ENCODE measurements at regions of chr1 and their contacts with region 1.

Region 1: GRCh38 chr1:192668434-192668983 is 32.6 kb downstream of the RGS13 start:
- DNase-seq: no peak
- ATAC-seq: no peak
- H3K4me3 Mint-ChIP-seq: no peak overlapping the region
- H3K27ac Mint-ChIP-seq: no peak overlapping the region
- H3K4me1 Mint-ChIP-seq: no peaks in the 10 kb centered on the region
- H3K27me3 Mint-ChIP-seq: peaks cover 8% of the 10 kb centered on the region
- CTCF ChIP-seq: no peak

Region 2: DNA sequence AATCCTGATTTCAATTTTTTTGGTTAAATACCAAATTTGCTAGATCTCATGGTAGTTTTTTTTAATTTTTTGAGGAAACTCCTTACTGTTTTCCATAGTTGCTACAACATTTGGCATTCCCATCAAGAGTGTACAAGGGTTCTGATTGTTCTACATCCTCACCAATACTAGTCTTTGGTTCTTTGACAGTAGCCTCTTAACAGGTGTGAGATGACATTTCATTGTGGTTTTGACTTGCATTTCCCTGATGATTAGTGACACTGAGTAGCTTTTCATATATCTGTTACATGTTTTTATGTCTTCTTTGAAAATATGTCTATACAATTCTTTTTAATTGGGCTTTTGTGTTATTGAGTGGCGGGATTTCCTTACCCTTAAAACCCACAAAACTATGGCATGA is 53.5 kb before region 1 on chr1:
- CTCF ChIA-PET with region 1: no interaction called
- POLR2A ChIA-PET with region 1: no interaction called
- intact Hi-C with region 1: loop called (anchors 5 kb)
- DNase-seq: no peak
- ATAC-seq: no peak
- H3K4me3 Mint-ChIP-seq: no peak overlapping the region
- H3K27ac Mint-ChIP-seq: no peak overlapping the region
- H3K4me1 Mint-ChIP-seq: no peaks in the 10 kb centered on the region
- H3K27me3 Mint-ChIP-seq: no peaks in the 10 kb centered on the region
- CTCF ChIP-seq: no peak

Measured in activated CD8-positive, alpha-beta T cell treated with anti-CD3 and anti-CD28 coated beads for 36 hours (primary cell).